ENCODE measurements at regions of chr10 and their contacts with region 1.

Region 1: DNA sequence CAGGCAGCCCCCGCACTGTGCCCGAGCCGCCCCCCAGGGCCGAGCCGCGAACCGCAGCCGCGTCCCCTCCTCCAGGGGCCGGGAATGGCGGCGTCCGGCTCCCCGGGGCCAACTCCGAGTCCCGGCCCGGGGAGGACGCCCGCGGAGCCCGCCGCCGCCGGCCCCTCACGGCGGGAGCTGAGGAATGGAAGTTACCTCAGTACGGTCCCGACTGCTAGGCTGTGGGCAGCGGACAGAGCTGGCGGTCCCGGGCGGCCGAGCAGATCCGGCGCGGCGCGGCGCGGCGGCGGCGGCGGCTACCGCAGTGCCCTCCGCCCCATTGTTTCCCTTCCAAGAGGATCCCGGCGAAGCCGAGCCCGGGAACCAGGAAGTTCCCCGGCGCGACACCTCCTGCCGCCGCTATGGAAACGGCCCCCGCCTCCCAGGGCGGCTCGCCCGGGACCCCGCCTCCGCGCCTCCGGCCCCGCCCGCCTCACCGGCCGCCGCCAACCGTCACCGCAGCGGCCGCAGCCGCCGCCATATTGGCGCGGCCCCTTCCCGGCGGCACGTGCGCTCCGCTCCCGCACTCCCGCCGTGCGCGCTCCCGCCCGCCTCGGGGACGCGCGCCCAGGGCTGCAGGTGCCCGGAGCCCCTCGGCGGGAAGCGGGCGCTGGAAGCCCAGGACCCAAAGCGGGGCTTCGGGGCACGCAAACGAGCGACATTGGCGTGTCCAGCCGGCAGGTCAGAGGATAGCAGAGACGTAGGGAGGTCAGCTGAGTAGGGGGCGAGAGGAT is at the start of gene USP6NL:
- DNase-seq: peak; percentile 72
- H3K4me3 Mint-ChIP-seq: peak within 1 kb of the TSS; percentile 83
- H3K27ac Mint-ChIP-seq: peak within 1 kb of the TSS; percentile 70
- H3K4me1 Mint-ChIP-seq: peaks cover 38% of the 10 kb centered on the region
- H3K27me3 Mint-ChIP-seq: peaks cover 2% of the 10 kb centered on the region
- total RNA-seq, gene USP6NL: 3.2 to 3.4 TPM

Region 2: DNA sequence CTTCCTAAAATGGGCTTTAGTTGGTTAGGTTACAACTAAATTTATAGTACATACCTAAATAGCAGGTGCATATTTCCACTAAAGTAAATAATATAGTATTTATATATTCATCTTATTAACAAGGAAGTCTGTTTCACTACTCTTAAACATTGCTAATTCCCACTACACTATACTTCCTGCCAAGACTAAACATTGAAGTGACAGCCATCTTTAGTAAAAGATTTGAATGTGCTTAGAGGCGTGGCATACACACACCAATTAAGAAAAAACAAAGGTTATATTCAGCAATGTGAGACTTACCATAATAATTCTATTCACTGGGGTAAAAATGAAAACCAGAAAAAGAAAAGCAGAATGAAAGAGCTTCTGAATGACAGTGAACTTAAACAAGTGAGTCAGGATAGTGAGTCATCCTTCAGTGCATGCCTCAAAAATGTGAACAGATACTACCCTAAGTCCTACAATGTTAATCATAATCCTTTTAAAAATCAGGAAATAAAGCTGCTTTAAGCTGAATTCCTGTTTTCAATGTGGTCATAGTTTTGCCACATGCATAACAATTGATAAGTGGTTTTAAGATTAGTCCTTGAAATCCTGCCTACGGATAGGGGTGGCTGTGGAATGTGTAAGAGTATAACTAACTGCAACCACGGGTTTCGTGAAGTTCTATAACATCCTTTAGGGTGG is 59.4 kb before region 1 on chr10:
- CTCF ChIA-PET with region 1: no interaction called
- POLR2A ChIA-PET with region 1: no interaction called
- intact Hi-C with region 1: loop called (anchors 2 kb)
- DNase-seq: no peak
- H3K4me3 Mint-ChIP-seq: no peak overlapping the region
- H3K27ac Mint-ChIP-seq: peak overlapping the region; percentile 58
- H3K4me1 Mint-ChIP-seq: peaks cover 33% of the 10 kb centered on the region
- H3K27me3 Mint-ChIP-seq: peaks cover 1% of the 10 kb centered on the region

Region 3: DNA sequence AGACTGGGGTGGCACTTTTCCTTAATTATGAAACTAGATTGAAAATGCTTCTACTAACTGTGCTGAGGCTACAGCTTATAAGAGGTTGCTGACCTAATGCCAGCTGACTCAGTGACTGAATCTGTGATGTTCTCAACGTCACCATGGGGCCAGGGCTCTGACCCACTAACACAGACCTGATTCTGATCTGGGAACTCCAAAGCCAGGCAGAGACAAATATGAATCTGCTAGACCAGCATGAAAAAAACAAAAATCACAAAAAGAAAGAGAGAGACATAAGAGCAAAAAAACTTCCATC is 16.1 kb before region 1 on chr10:
- CTCF ChIA-PET with region 1: no interaction called
- POLR2A ChIA-PET with region 1: no interaction called
- intact Hi-C with region 1: no loop called
- DNase-seq: no peak
- H3K4me3 Mint-ChIP-seq: no peak overlapping the region
- H3K27ac Mint-ChIP-seq: no peak overlapping the region
- H3K4me1 Mint-ChIP-seq: peaks cover 12% of the 10 kb centered on the region
- H3K27me3 Mint-ChIP-seq: peaks cover 1% of the 10 kb centered on the region

Region 4: GRCh38 chr10:11684717-11685645 is 73.5 kb after region 1 on chr10:
- CTCF ChIA-PET with region 1: no interaction called
- POLR2A ChIA-PET with region 1: no interaction called
- intact Hi-C with region 1: loop called (anchors 2 kb)
- DNase-seq: peak; percentile 80
- H3K4me3 Mint-ChIP-seq: peak overlapping the region; percentile 67
- H3K27ac Mint-ChIP-seq: peak overlapping the region; percentile 82
- H3K4me1 Mint-ChIP-seq: peaks cover 27% of the 10 kb centered on the region
- H3K27me3 Mint-ChIP-seq: no peaks in the 10 kb centered on the region

Measured in activated CD4-positive, alpha-beta memory T cell treated with anti-CD3 and anti-CD28 coated beads for 36 hours (primary cell).